ENCODE measurements at regions of chr11 and their contacts with region 1.

Region 1: GRCh38 chr11:19076744-19077589 is 16.4 kb upstream of the MRGPRX2 start:
- DNase-seq: peak; percentile 75
- H3K4me3 ChIP-seq: no peak overlapping the region
- H3K27ac ChIP-seq: peak overlapping the region; percentile 83
- H3K4me1 ChIP-seq: peaks cover 45% of the 10 kb centered on the region
- H3K27me3 ChIP-seq: no peaks in the 10 kb centered on the region
- CTCF ChIP-seq: peak; percentile 94 to 97
- POLR2A ChIP-seq: no peak

Region 2: DNA sequence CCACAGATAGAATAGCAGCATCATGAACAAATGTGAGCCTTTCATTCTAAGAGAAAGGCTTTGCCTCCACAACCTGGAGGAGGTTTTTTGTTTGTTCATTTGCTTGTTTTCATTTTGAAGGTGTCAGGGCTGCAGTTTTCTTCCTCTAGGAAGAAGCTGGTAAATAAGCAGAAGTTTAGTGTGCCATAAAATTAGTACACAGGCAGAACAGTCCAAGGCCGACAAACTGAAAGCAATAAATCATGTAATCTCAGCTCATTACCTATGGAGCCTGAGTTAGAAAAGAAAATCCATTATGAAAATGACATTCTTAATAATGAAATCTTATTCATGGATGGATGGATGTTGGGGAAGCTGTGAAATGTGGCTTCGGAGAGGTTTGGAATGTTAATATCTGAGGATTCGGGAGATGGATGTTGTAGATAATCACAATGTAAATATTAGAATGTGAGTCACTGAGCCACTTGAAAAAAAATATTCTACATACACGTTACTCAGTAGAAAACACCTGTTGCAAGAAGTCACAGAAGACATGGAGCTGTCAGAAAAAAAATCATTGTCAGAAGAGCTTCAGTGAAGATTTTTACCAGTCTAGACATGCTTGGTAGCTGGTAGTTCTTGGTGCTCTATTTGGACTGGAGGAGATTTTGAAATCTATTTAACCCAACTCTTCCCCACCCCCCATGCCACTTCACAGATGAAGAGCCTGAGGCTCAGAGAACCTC is 25.0 kb after region 1 on chr11:
- CTCF ChIA-PET with region 1: interaction called, 121 read pairs
- POLR2A ChIA-PET with region 1: interaction called, 5 read pairs
- dilution Hi-C with region 1: no loop called
- intact Hi-C with region 1: no loop called
- DNase-seq: peak; percentile 28
- H3K4me3 ChIP-seq: no peak overlapping the region
- H3K27ac ChIP-seq: no peak overlapping the region
- H3K4me1 ChIP-seq: peaks cover 15% of the 10 kb centered on the region
- H3K27me3 ChIP-seq: no peaks in the 10 kb centered on the region
- CTCF ChIP-seq: no peak
- POLR2A ChIP-seq: no peak

Region 3: DNA sequence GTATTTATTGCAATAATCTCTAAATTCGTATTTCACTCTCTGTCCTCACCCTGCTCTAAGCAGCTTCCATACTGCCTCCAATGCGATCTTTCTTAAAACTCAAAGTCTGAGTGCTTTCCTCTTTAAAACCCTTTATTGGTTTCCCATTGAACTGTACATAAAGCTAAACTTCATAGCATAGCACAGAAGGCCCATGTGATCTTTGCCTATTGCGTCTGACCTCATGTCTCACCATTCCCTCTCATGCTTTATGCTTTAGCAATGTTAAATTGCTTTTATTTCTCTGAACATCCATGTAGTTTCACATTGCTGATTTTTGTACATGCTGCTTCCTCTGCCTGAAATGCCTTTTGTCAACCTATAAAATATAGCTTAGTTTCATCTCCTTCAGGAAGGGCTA is 68.4 kb after region 1 on chr11:
- CTCF ChIA-PET with region 1: interaction called, 105 read pairs
- POLR2A ChIA-PET with region 1: no interaction called
- dilution Hi-C with region 1: no loop called
- intact Hi-C with region 1: loop called (anchors 2 kb)
- DNase-seq: no peak
- H3K4me3 ChIP-seq: no peak overlapping the region
- H3K27ac ChIP-seq: no peak overlapping the region
- H3K4me1 ChIP-seq: no peaks in the 10 kb centered on the region
- H3K27me3 ChIP-seq: no peaks in the 10 kb centered on the region
- CTCF ChIP-seq: no peak
- POLR2A ChIP-seq: no peak

Region 4: GRCh38 chr11:19173004-19173689 is 96.2 kb after region 1 on chr11:
- CTCF ChIA-PET with region 1: interaction called, 31 read pairs
- POLR2A ChIA-PET with region 1: no interaction called
- dilution Hi-C with region 1: no loop called
- intact Hi-C with region 1: no loop called
- DNase-seq: no peak
- H3K4me3 ChIP-seq: no peak overlapping the region
- H3K27ac ChIP-seq: no peak overlapping the region
- H3K4me1 ChIP-seq: peaks cover 9% of the 10 kb centered on the region
- H3K27me3 ChIP-seq: no peaks in the 10 kb centered on the region
- CTCF ChIP-seq: no peak
- POLR2A ChIP-seq: no peak

Region 5: GRCh38 chr11:19259487-19260345 is 182.7 kb after region 1 on chr11:
- CTCF ChIA-PET with region 1: interaction called, 22 read pairs
- POLR2A ChIA-PET with region 1: no interaction called
- dilution Hi-C with region 1: no loop called
- intact Hi-C with region 1: no loop called
- DNase-seq: peak; percentile 73
- H3K4me3 ChIP-seq: peak overlapping the region in 1 of 3 experiments; percentile 30
- H3K27ac ChIP-seq: no peak overlapping the region
- H3K4me1 ChIP-seq: no peaks in the 10 kb centered on the region
- H3K27me3 ChIP-seq: peaks cover 9 to 11% of the 10 kb centered on the region in 2 experiments
- CTCF ChIP-seq: peak; percentile 87 to 95
- POLR2A ChIP-seq: no peak

Region 6: GRCh38 chr11:19561011-19561410 is 484.0 kb after region 1 on chr11:
- CTCF ChIA-PET with region 1: interaction called, 72 read pairs
- POLR2A ChIA-PET with region 1: no interaction called
- dilution Hi-C with region 1: no loop called
- intact Hi-C with region 1: no loop called
- DNase-seq: peak; percentile 81
- H3K4me3 ChIP-seq: no peak overlapping the region
- H3K27ac ChIP-seq: peak overlapping the region; percentile 61
- H3K4me1 ChIP-seq: peaks cover 23% of the 10 kb centered on the region
- H3K27me3 ChIP-seq: no peaks in the 10 kb centered on the region
- CTCF ChIP-seq: no peak
- POLR2A ChIP-seq: no peak

Measured in endothelial cell of umbilical vein (primary cell).